ENCODE measurements at regions of chr17 and their contacts with region 1.

Region 1: GRCh38 chr17:33779225-33779591 is 475.9 kb upstream of the CCL2 start:
- DNase-seq: no peak
- H3K4me3 ChIP-seq: no peak overlapping the region
- H3K27ac ChIP-seq: no peak overlapping the region
- H3K4me1 ChIP-seq: no peaks in the 10 kb centered on the region
- H3K27me3 ChIP-seq: peaks cover 0 to 46% (median 5%) of the 10 kb centered on the region in 7 donors
- CTCF ChIP-seq: peak; percentile 65 to 97 (median 84)
- POLR2A ChIP-seq: no peak

Region 2: GRCh38 chr17:34081269-34081668 is 302.1 kb after region 1 on chr17:
- intact Hi-C with region 1: no loop called
- DNase-seq: no peak
- H3K4me3 ChIP-seq: no peak overlapping the region
- H3K27ac ChIP-seq: no peak overlapping the region
- H3K4me1 ChIP-seq: no peaks in the 10 kb centered on the region
- H3K27me3 ChIP-seq: peaks cover 0 to 22% (median 0%) of the 10 kb centered on the region in 7 donors
- CTCF ChIP-seq: peak in 2 of 11 experiments; percentile 11 to 20
- POLR2A ChIP-seq: no peak

Region 3: GRCh38 chr17:34146440-34147043 is 367.3 kb after region 1 on chr17:
- intact Hi-C with region 1: loop called (anchors 5 kb)
- DNase-seq: no peak
- H3K4me3 ChIP-seq: no peak overlapping the region
- H3K27ac ChIP-seq: no peak overlapping the region
- H3K4me1 ChIP-seq: no peaks in the 10 kb centered on the region
- H3K27me3 ChIP-seq: peaks cover 0 to 63% (median 0%) of the 10 kb centered on the region in 7 donors
- CTCF ChIP-seq: peak in 7 of 11 experiments; percentile 28 to 57 (median 55)
- POLR2A ChIP-seq: no peak